Activated CD4-positive, alpha-beta T cell treated with anti-CD3 and anti-CD28 coated beads for 36 hours (primary cell): ENCODE measurements at regions of chrX and their contacts with region 1.

Region 1: GRCh38 chrX:47384502-47384901 is 14.1 kb downstream of the ZNF157 start:
- DNase-seq: peak; percentile 77
- ATAC-seq: peak; percentile 75
- H3K4me3 Mint-ChIP-seq: no peak overlapping the region
- H3K27ac Mint-ChIP-seq: no peak overlapping the region
- H3K4me1 Mint-ChIP-seq: peaks cover 18% of the 10 kb centered on the region
- H3K27me3 Mint-ChIP-seq: no peaks in the 10 kb centered on the region

Region 2: GRCh38 chrX:47233337-47234113 is 151.0 kb before region 1 on chrX:
- CTCF ChIA-PET with region 1: no interaction called
- POLR2A ChIA-PET with region 1: no interaction called
- intact Hi-C with region 1: loop called in 1 of 2 experiments (anchors 5 kb)
- DNase-seq: peak; percentile 96
- ATAC-seq: peak; percentile 89
- H3K4me3 Mint-ChIP-seq: peak overlapping the region; percentile 77
- H3K27ac Mint-ChIP-seq: peak overlapping the region; percentile 95
- H3K4me1 Mint-ChIP-seq: peaks cover 23% of the 10 kb centered on the region
- H3K27me3 Mint-ChIP-seq: no peaks in the 10 kb centered on the region

Region 3: DNA sequence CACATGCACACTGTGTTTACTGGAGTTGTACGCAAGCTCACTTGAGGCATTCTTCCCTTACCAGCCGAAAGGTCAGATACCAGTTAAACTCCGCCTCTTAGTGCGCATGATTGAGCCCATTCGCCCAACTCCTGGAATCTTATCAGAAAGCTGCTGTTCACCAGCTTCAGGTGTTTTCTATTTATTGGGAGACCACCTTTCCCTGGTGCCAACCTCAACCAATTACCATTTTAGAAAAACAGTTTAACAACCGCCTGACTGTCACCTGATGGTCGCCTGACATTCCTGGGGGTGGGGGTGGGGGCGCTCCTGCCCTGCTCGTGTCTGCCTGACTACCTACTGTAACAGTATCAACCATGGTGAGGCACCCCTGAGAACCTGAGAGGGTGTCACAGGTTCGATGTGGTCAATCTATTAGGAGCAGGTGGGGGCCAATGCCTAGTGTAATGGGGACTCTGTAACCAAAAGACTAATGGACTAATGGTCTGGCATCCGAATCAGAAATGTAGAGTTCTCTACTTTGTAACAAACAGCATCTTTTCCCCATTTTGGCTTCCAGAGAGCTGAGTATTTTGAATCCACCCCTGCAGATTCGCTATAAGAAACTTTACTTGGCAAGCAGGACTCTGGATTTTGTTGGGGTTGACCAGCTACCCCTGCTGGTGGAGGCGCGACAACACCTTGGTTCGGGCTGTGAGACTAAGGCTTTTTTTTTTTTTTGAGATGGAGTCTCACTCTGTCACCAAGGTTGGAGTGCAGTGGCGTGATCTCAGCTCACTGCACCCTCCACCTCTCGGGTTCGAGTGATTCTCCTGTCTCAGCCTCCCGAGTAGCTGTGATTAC is 72.3 kb before region 1 on chrX:
- CTCF ChIA-PET with region 1: no interaction called
- POLR2A ChIA-PET with region 1: no interaction called
- intact Hi-C with region 1: loop called in 1 of 2 experiments (anchors 5 kb)
- DNase-seq: peak; percentile 74
- ATAC-seq: peak; percentile 98
- H3K4me3 Mint-ChIP-seq: no peak overlapping the region
- H3K27ac Mint-ChIP-seq: no peak overlapping the region
- H3K4me1 Mint-ChIP-seq: peaks cover 3% of the 10 kb centered on the region
- H3K27me3 Mint-ChIP-seq: no peaks in the 10 kb centered on the region

Region 4: DNA sequence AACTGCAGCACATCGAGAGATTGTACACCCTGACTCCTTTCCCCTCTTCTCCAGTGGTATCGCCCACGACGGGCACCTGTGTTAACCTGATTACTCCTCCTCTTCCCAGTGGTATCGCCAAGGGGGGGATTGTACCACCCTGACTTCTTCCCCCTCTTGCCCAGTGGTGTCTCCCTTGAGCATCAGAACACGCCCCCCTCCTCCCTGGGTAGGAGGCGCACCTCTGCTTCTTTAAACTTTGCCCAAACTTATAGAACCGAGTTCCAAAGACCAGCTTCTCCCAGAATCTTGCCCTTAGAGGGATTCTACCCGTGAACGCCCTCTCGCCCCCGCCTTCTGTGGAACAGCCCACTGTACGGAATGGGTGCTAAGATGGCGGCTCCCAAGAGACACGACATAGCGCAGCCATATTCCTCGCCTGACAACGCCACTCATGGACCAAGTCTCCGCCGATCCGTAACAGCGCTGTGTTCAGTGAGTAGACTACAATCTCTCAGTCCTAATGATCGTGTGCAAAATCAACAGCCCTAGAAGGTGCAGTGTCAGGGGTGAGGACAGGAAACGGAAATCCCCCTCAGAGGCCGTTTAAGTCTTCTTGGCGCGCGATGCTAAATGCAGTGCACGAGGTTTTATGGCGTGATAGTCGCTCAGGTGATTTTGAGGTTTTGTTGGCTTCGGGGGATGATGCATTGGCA is 18.3 kb before region 1 on chrX:
- CTCF ChIA-PET with region 1: interaction called, 4 read pairs
- POLR2A ChIA-PET with region 1: no interaction called
- intact Hi-C with region 1: loop called in 1 of 2 experiments (anchors 1 kb)
- DNase-seq: peak; percentile 80
- ATAC-seq: peak; percentile 94
- H3K4me3 Mint-ChIP-seq: peak overlapping the region; percentile 80
- H3K27ac Mint-ChIP-seq: peak overlapping the region; percentile 93
- H3K4me1 Mint-ChIP-seq: peaks cover 15% of the 10 kb centered on the region
- H3K27me3 Mint-ChIP-seq: no peaks in the 10 kb centered on the region

Region 5: DNA sequence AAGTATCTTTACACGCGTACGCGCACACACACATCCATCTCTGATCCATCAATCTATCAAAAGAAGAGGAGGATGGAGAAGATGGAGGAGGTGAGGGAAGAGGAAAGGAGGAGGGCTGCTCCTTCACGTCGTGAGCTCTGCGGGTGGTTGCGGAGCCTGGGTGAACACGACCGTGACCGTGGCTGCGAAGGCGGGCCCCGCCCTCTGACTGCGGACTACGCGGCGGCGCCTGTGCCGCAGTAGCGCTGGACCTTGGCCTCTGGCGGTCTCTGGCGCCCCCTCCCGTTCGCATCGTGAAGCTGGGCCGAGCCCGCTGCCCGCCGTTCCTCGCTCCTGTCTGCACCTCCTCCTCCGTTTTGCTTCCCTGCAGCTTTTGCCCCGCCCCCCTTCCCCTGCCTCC is 138.8 kb after region 1 on chrX:
- CTCF ChIA-PET with region 1: interaction called, 10 read pairs
- POLR2A ChIA-PET with region 1: no interaction called
- intact Hi-C with region 1: loop called (anchors 1 to 10 kb)
- DNase-seq: peak; percentile 88
- ATAC-seq: peak; percentile 99
- H3K4me3 Mint-ChIP-seq: peak overlapping the region; percentile 60
- H3K27ac Mint-ChIP-seq: no peak overlapping the region
- H3K4me1 Mint-ChIP-seq: no peaks in the 10 kb centered on the region
- H3K27me3 Mint-ChIP-seq: no peaks in the 10 kb centered on the region

Region 6: GRCh38 chrX:47697191-47697590 is 312.7 kb after region 1 on chrX:
- CTCF ChIA-PET with region 1: no interaction called
- POLR2A ChIA-PET with region 1: no interaction called
- intact Hi-C with region 1: no loop called
- DNase-seq: no peak
- ATAC-seq: no peak
- H3K4me3 Mint-ChIP-seq: no peak overlapping the region
- H3K27ac Mint-ChIP-seq: no peak overlapping the region
- H3K4me1 Mint-ChIP-seq: no peaks in the 10 kb centered on the region
- H3K27me3 Mint-ChIP-seq: peaks cover 2% of the 10 kb centered on the region